Naive thymus-derived CD4-positive, alpha-beta T cell (primary cell): ENCODE measurements at regions of chr4 and their contacts with region 1.

Region 1: DNA sequence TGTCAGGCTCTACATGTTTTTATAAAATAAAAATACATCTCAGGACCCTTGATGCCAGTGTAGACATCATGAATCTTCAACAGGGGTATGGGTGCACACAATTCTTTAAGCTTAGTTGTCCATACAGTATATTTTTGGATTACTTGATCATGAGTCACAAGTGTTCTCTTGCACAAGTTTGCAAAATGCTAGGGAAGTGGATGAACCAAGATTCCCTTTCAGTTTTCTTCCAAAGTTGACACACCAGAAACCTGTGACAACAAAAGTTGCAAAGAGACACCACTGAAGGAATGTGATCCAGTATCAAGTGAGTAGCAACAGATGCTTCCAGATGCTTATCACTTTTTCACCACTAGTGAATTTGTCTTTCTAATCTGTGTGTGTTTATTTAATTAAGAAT is 1021.2 kb downstream of the PCDH7 start:
- DNase-seq: no peak
- ATAC-seq: no peak
- H3K4me3 ChIP-seq: no peak overlapping the region
- H3K4me3 Mint-ChIP-seq: no peak overlapping the region
- H3K27ac ChIP-seq: no peak overlapping the region
- H3K27ac Mint-ChIP-seq: no peak overlapping the region
- H3K4me1 ChIP-seq: no peaks in the 10 kb centered on the region
- H3K4me1 Mint-ChIP-seq: no peaks in the 10 kb centered on the region
- H3K27me3 ChIP-seq: no peaks in the 10 kb centered on the region
- H3K27me3 Mint-ChIP-seq: no peaks in the 10 kb centered on the region

Region 2: GRCh38 chr4:30553706-30554105 is 1187.6 kb before region 1 on chr4:
- CTCF ChIA-PET with region 1: no interaction called
- POLR2A ChIA-PET with region 1: no interaction called
- intact Hi-C with region 1: no loop called
- DNase-seq: no peak
- ATAC-seq: no peak
- H3K4me3 ChIP-seq: no peak overlapping the region
- H3K4me3 Mint-ChIP-seq: no peak overlapping the region
- H3K27ac ChIP-seq: no peak overlapping the region
- H3K27ac Mint-ChIP-seq: no peak overlapping the region
- H3K4me1 ChIP-seq: no peaks in the 10 kb centered on the region
- H3K4me1 Mint-ChIP-seq: no peaks in the 10 kb centered on the region
- H3K27me3 ChIP-seq: no peaks in the 10 kb centered on the region
- H3K27me3 Mint-ChIP-seq: no peaks in the 10 kb centered on the region

Region 3: DNA sequence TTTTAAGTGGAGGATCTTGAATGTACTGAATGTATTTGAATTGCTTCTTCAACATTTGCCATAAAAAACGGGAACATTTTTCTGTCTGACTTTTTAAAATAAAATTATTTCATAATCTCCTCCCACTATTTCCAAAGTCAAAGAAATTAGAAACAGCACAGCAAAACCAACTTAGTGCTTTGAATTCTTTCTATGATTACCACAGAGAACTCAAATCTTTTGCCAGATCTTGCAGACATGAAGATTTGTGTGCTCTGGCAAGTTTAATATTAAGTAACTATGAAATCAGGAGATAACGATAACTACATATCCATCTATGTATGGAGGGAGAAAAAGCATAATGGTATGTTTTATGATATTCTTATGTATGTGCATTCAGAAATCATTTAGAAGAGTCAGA is 39.0 kb before region 1 on chr4:
- CTCF ChIA-PET with region 1: no interaction called
- POLR2A ChIA-PET with region 1: no interaction called
- intact Hi-C with region 1: loop called in 1 of 2 experiments (anchors 1 kb)
- DNase-seq: no peak
- ATAC-seq: no peak
- H3K4me3 ChIP-seq: no peak overlapping the region
- H3K4me3 Mint-ChIP-seq: no peak overlapping the region
- H3K27ac ChIP-seq: no peak overlapping the region
- H3K27ac Mint-ChIP-seq: no peak overlapping the region
- H3K4me1 ChIP-seq: no peaks in the 10 kb centered on the region
- H3K4me1 Mint-ChIP-seq: no peaks in the 10 kb centered on the region
- H3K27me3 ChIP-seq: no peaks in the 10 kb centered on the region
- H3K27me3 Mint-ChIP-seq: no peaks in the 10 kb centered on the region

Region 4: DNA sequence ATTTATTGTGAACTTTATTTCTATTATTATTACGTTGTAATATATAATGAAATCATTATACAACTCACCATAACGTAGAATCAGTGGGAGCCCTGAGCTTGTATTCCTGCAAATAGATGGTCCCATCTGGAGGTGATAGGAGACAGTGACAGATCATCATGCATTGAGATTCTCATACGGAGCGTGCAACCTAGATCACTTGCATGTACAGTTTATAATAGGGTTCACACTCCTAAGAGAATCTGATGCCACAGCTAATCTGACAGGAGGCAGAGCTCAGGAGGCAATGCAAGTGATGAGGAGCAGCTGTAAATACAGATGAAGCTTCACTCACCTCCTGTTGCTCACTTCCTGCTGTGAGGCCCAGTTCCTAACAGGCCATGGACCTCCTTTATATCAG is 1149.1 kb after region 1 on chr4:
- CTCF ChIA-PET with region 1: no interaction called
- POLR2A ChIA-PET with region 1: no interaction called
- intact Hi-C with region 1: no loop called
- DNase-seq: no peak
- ATAC-seq: no peak
- H3K4me3 ChIP-seq: no peak overlapping the region
- H3K4me3 Mint-ChIP-seq: no peak overlapping the region
- H3K27ac ChIP-seq: no peak overlapping the region
- H3K27ac Mint-ChIP-seq: no peak overlapping the region
- H3K4me1 ChIP-seq: no peaks in the 10 kb centered on the region
- H3K4me1 Mint-ChIP-seq: no peaks in the 10 kb centered on the region
- H3K27me3 ChIP-seq: no peaks in the 10 kb centered on the region
- H3K27me3 Mint-ChIP-seq: no peaks in the 10 kb centered on the region